ENCODE measurements at regions of chr17 and their contacts with region 1.

Region 1: GRCh38 chr17:77577491-77577890 is 381.0 kb upstream of the TNRC6C start:
- DNase-seq: no peak
- H3K4me3 ChIP-seq: no peak overlapping the region
- H3K27ac ChIP-seq: no peak overlapping the region
- H3K4me1 ChIP-seq: peaks cover 0 to under 1% (median 0%) of the 10 kb centered on the region in 4 donors
- H3K27me3 ChIP-seq: peaks cover 5% of the 10 kb centered on the region
- CTCF ChIP-seq: no peak
- EP300 ChIP-seq: no peak
- POLR2A ChIP-seq: no peak

Region 2: DNA sequence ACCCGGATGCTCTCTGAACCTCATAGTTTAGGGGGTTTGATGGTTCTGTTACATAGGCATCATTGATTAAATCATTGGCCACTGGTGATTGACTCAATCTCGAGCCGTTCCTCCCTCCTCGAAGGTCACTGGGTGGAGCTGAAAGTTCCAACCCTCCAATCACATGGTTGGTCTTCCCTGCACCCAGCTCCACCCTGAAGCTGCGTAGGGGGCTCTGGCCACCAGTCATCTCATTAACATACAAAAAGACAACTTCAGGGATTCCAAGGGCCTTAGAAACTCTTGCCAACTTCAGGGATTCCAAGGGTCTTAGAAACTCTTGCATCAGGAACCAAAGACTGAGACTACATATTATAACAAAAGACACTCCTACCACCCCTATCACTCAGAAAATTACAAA is 74.5 kb after region 1 on chr17:
- in situ Hi-C with region 1: no loop called
- intact Hi-C with region 1: loop called (anchors 2 kb)
- DNase-seq: no peak
- H3K4me3 ChIP-seq: no peak overlapping the region
- H3K27ac ChIP-seq: no peak overlapping the region
- H3K4me1 ChIP-seq: no peaks in the 10 kb centered on the region
- H3K27me3 ChIP-seq: peaks cover 15% of the 10 kb centered on the region
- CTCF ChIP-seq: no peak
- EP300 ChIP-seq: no peak
- POLR2A ChIP-seq: no peak